Gastrocnemius medialis (tissue), 4 donors: ENCODE measurements at regions of chr16 and their contacts with region 1.

Region 1: DNA sequence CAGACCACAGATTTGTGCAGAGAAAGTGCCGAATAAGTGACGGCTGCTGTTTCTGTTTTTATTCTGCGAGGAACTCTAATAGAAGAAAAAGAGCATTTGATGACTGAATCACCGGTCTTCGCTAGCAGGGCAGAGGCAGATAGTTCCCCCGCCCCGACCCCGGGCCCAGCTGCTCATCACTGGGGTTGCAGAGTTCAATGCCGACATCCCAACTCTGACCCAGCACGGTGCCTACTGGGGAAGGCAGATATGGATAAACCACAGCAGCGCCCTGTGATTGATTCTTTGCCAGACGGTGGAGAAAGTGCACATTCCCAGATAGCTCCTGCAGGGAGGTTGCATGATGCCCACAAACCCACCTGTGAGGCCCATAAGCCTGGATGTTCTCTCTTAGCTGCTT is 357.9 kb upstream of the HSBP1 start:
- DNase-seq: no peak
- ATAC-seq: no peak
- H3K4me3 ChIP-seq: no peak overlapping the region
- H3K27ac ChIP-seq: no peak overlapping the region
- H3K4me1 ChIP-seq: no peaks in the 10 kb centered on the region
- H3K27me3 ChIP-seq: no peaks in the 10 kb centered on the region
- CTCF ChIP-seq: no peak
- POLR2A ChIP-seq: no peak

Region 2: DNA sequence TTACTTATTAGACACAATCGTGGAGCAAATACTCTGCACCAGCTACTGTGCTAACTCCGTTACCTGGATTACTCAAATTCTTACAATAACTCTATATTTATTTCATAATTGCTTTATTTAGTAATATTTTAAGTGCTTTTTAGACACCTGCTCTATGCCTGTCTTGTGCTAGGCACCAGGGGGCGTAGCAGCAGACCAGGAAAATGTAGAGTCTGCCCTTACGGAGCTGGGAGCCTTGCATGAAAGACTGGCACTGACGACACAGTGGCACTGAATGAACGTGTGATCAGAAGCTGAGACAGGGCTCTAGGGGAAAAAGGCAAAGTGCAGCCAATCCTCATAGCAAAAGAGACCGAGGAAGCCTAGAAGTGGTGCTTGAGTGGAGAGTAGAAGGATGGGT is 336.5 kb before region 1 on chr16:
- in situ Hi-C with region 1: no loop called
- intact Hi-C with region 1: loop called (anchors 5 kb)
- DNase-seq: no peak
- ATAC-seq: no peak
- H3K4me3 ChIP-seq: no peak overlapping the region
- H3K27ac ChIP-seq: no peak overlapping the region
- H3K4me1 ChIP-seq: peaks cover 15 to 25% of the 10 kb centered on the region in 2 donors
- H3K27me3 ChIP-seq: no peaks in the 10 kb centered on the region
- CTCF ChIP-seq: peak in 3 of 5 experiments; percentile 22 to 37 (median 34)
- POLR2A ChIP-seq: no peak